B cell (primary cell): ENCODE measurements at regions of chr5 and their contacts with region 1.

Region 1: GRCh38 chr5:14644623-14645237 is 19.8 kb upstream of the OTULIN start:
- DNase-seq: no peak
- ATAC-seq: no peak
- H3K4me3 ChIP-seq: no peak overlapping the region
- H3K4me3 Mint-ChIP-seq: no peak overlapping the region
- H3K27ac ChIP-seq: no peak overlapping the region
- H3K27ac Mint-ChIP-seq: no peak overlapping the region
- H3K4me1 ChIP-seq: no peaks in the 10 kb centered on the region
- H3K4me1 Mint-ChIP-seq: no peaks in the 10 kb centered on the region
- H3K27me3 ChIP-seq: peaks cover 0 to 5% (median 0%) of the 10 kb centered on the region in 4 experiments
- H3K27me3 Mint-ChIP-seq: peaks cover 38% of the 10 kb centered on the region
- CTCF ChIP-seq: no peak

Region 2: GRCh38 chr5:13987843-13988464 is 656.8 kb before region 1 on chr5:
- CTCF ChIA-PET with region 1: interaction called, 40 read pairs
- POLR2A ChIA-PET with region 1: no interaction called
- intact Hi-C with region 1: loop called (anchors 1 kb)
- DNase-seq: peak; percentile 65
- ATAC-seq: no peak
- H3K4me3 ChIP-seq: no peak overlapping the region
- H3K4me3 Mint-ChIP-seq: no peak overlapping the region
- H3K27ac ChIP-seq: no peak overlapping the region
- H3K27ac Mint-ChIP-seq: no peak overlapping the region
- H3K4me1 ChIP-seq: no peaks in the 10 kb centered on the region
- H3K4me1 Mint-ChIP-seq: peaks cover 2% of the 10 kb centered on the region
- H3K27me3 ChIP-seq: no peaks in the 10 kb centered on the region
- H3K27me3 Mint-ChIP-seq: peaks cover 17% of the 10 kb centered on the region
- CTCF ChIP-seq: peak; percentile 83

Region 3: DNA sequence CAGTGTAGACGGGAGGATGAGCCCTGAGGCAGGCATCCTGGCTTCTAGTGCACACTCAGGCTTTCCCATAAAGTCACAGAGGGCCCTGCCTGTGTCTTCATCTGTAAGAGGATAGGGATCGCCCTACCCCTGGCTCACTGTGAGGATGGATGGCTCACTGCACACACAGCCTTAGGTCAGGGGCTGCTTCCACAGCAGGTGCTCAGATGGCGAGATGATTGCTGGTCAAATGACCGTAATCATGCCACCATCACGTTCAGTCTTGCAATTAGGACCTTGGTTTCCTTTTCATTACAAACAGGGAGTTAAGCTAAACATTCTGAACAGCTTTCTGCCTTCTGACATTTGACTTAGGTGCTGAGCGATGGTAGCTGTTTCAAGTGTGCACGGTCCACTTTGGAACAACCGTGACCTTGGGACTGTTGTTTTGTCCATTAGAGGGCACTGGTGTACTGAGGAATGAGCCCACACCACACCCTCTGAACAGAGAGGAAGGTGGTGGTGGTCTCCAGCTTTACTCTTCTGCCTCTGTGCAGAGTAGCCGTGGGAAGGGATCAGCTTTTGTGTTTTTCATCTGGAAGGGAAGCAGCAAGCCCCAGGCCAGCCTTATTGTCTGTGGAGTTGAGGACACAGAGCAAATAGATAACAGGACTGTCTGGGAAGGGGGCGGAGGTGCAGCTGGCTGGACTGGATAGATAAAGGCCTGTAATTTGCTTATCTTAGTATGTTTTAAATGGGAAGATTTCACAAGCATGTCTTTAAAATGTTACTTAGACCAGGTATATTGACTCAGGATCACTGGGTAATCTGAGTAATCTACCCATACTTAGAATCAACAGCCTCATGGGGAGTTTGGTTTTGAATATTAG is 318.5 kb before region 1 on chr5:
- CTCF ChIA-PET with region 1: interaction called, 7 read pairs
- POLR2A ChIA-PET with region 1: no interaction called
- intact Hi-C with region 1: loop called (anchors 2 kb)
- DNase-seq: peak; percentile 43
- ATAC-seq: peak; percentile 62
- H3K4me3 ChIP-seq: no peak overlapping the region
- H3K4me3 Mint-ChIP-seq: no peak overlapping the region
- H3K27ac ChIP-seq: no peak overlapping the region
- H3K27ac Mint-ChIP-seq: peak overlapping the region; percentile 11
- H3K4me1 ChIP-seq: peaks cover 29 to 32% of the 10 kb centered on the region in 2 donors
- H3K4me1 Mint-ChIP-seq: peaks cover 37% of the 10 kb centered on the region
- H3K27me3 ChIP-seq: no peaks in the 10 kb centered on the region
- H3K27me3 Mint-ChIP-seq: no peaks in the 10 kb centered on the region
- CTCF ChIP-seq: peak; percentile 36

Region 4: DNA sequence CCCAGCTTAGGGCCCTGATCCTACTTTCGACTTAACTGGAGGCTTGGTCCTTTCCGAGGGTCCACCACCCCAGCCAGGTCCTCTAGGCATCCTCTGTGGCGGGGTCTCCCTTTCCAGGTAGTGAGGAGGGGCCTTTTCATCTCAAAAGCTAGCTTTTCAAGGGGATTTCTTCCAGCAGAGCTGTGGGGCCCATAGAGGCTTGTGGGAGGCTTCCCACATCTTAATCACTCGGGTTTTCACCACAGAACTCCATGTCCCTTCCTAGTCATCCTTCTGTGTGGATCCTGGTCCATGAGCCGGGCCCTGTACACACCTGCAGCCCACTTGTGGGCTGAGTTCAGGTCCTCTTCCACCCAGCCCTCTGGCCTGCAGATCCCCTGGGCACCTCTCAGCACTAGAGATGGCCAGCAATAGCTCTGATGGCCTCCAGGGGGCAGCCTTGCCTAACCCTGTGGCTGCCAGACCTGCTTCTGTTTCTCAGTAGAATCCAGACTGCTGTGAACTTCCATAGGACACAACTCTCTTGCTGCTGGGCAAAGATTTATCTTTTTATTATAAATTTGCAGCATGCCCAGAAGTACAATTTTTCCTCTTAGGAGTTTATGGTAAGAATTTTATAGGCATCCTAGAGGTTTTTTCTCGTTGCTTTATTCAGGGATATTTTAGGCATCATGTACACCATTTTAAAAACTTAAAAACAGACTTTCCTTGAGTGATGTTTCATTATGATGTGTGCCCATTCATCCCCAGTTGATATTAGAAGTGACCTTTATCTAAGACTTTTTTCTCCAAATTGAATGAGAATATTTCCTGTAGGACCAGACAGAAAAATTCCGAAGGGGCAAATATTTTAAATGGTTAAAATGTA is 292.7 kb before region 1 on chr5:
- CTCF ChIA-PET with region 1: interaction called, 22 read pairs
- POLR2A ChIA-PET with region 1: no interaction called
- intact Hi-C with region 1: loop called (anchors 1 kb)
- DNase-seq: peak; percentile 72
- ATAC-seq: peak; percentile 93
- H3K4me3 ChIP-seq: no peak overlapping the region
- H3K4me3 Mint-ChIP-seq: no peak overlapping the region
- H3K27ac ChIP-seq: no peak overlapping the region
- H3K27ac Mint-ChIP-seq: peak overlapping the region; percentile 68
- H3K4me1 ChIP-seq: peaks cover 9 to 21% of the 10 kb centered on the region in 2 donors
- H3K4me1 Mint-ChIP-seq: peaks cover 32% of the 10 kb centered on the region
- H3K27me3 ChIP-seq: no peaks in the 10 kb centered on the region
- H3K27me3 Mint-ChIP-seq: no peaks in the 10 kb centered on the region
- CTCF ChIP-seq: peak; percentile 96

Region 5: GRCh38 chr5:14388741-14389140 is 256.0 kb before region 1 on chr5:
- CTCF ChIA-PET with region 1: interaction called, 11 read pairs
- POLR2A ChIA-PET with region 1: no interaction called
- intact Hi-C with region 1: no loop called
- DNase-seq: no peak
- ATAC-seq: no peak
- H3K4me3 ChIP-seq: no peak overlapping the region
- H3K4me3 Mint-ChIP-seq: no peak overlapping the region
- H3K27ac ChIP-seq: no peak overlapping the region
- H3K27ac Mint-ChIP-seq: no peak overlapping the region
- H3K4me1 ChIP-seq: no peaks in the 10 kb centered on the region
- H3K4me1 Mint-ChIP-seq: no peaks in the 10 kb centered on the region
- H3K27me3 ChIP-seq: no peaks in the 10 kb centered on the region
- H3K27me3 Mint-ChIP-seq: no peaks in the 10 kb centered on the region
- CTCF ChIP-seq: no peak

Region 6: DNA sequence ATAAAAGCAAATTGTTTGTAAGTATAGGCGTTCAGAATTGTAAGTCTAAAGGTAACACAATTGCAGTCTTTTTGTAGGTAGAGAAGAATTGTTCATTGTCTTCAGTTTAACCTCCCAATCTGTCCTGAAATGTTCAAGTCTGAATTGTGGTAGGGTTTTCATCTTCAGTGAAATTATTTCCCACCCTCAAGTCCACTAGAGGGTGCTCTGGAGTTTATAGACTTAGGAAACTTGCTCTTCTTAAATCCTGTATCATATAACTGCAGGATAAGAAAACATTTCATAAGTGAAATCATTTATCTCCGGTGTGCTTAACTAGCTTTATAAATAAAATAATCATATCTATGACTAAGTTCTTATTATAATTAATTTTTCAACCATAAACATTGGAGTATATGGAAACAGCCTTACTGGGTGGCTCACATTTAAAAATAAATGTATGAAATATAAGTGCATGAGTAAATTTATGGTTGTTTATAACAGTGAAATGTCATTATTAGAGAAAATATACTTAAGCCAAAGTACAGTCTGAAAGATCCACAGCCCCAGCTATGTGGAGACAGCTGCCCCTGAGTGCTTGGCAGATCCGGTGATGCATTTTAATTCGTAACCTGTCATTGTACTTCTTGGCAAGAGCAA is 245.6 kb before region 1 on chr5:
- CTCF ChIA-PET with region 1: interaction called, 51 read pairs
- POLR2A ChIA-PET with region 1: no interaction called
- intact Hi-C with region 1: no loop called
- DNase-seq: peak; percentile 39
- ATAC-seq: no peak
- H3K4me3 ChIP-seq: no peak overlapping the region
- H3K4me3 Mint-ChIP-seq: no peak overlapping the region
- H3K27ac ChIP-seq: no peak overlapping the region
- H3K27ac Mint-ChIP-seq: no peak overlapping the region
- H3K4me1 ChIP-seq: no peaks in the 10 kb centered on the region
- H3K4me1 Mint-ChIP-seq: no peaks in the 10 kb centered on the region
- H3K27me3 ChIP-seq: no peaks in the 10 kb centered on the region
- H3K27me3 Mint-ChIP-seq: no peaks in the 10 kb centered on the region
- CTCF ChIP-seq: peak; percentile 70

Region 7: GRCh38 chr5:14489642-14490041 is 155.1 kb before region 1 on chr5:
- CTCF ChIA-PET with region 1: interaction called, 3 read pairs
- POLR2A ChIA-PET with region 1: no interaction called
- intact Hi-C with region 1: loop called (anchors 10 kb)
- DNase-seq: no peak
- ATAC-seq: no peak
- H3K4me3 ChIP-seq: no peak overlapping the region
- H3K4me3 Mint-ChIP-seq: no peak overlapping the region
- H3K27ac ChIP-seq: no peak overlapping the region
- H3K27ac Mint-ChIP-seq: no peak overlapping the region
- H3K4me1 ChIP-seq: no peaks in the 10 kb centered on the region
- H3K4me1 Mint-ChIP-seq: no peaks in the 10 kb centered on the region
- H3K27me3 ChIP-seq: no peaks in the 10 kb centered on the region
- H3K27me3 Mint-ChIP-seq: no peaks in the 10 kb centered on the region
- CTCF ChIP-seq: no peak

Region 8: GRCh38 chr5:14608169-14608568 is 36.6 kb before region 1 on chr5:
- CTCF ChIA-PET with region 1: no interaction called
- POLR2A ChIA-PET with region 1: no interaction called
- intact Hi-C with region 1: no loop called
- DNase-seq: no peak
- ATAC-seq: no peak
- H3K4me3 ChIP-seq: no peak overlapping the region
- H3K4me3 Mint-ChIP-seq: no peak overlapping the region
- H3K27ac ChIP-seq: no peak overlapping the region
- H3K27ac Mint-ChIP-seq: no peak overlapping the region
- H3K4me1 ChIP-seq: no peaks in the 10 kb centered on the region
- H3K4me1 Mint-ChIP-seq: no peaks in the 10 kb centered on the region
- H3K27me3 ChIP-seq: no peaks in the 10 kb centered on the region
- H3K27me3 Mint-ChIP-seq: no peaks in the 10 kb centered on the region
- CTCF ChIP-seq: no peak